ENCODE measurements at regions of chr2 and their contacts with region 1.

Region 1: GRCh38 chr2:86764661-86765307 is 25.9 kb downstream of the CD8A start:
- DNase-seq: peak; percentile 69
- ATAC-seq: peak; percentile 95
- H3K4me3 Mint-ChIP-seq: no peak overlapping the region
- H3K27ac Mint-ChIP-seq: peak overlapping the region; percentile 79
- H3K4me1 Mint-ChIP-seq: peaks cover 39% of the 10 kb centered on the region
- H3K27me3 Mint-ChIP-seq: no peaks in the 10 kb centered on the region
- CTCF ChIP-seq: peak; percentile 75

Region 2: DNA sequence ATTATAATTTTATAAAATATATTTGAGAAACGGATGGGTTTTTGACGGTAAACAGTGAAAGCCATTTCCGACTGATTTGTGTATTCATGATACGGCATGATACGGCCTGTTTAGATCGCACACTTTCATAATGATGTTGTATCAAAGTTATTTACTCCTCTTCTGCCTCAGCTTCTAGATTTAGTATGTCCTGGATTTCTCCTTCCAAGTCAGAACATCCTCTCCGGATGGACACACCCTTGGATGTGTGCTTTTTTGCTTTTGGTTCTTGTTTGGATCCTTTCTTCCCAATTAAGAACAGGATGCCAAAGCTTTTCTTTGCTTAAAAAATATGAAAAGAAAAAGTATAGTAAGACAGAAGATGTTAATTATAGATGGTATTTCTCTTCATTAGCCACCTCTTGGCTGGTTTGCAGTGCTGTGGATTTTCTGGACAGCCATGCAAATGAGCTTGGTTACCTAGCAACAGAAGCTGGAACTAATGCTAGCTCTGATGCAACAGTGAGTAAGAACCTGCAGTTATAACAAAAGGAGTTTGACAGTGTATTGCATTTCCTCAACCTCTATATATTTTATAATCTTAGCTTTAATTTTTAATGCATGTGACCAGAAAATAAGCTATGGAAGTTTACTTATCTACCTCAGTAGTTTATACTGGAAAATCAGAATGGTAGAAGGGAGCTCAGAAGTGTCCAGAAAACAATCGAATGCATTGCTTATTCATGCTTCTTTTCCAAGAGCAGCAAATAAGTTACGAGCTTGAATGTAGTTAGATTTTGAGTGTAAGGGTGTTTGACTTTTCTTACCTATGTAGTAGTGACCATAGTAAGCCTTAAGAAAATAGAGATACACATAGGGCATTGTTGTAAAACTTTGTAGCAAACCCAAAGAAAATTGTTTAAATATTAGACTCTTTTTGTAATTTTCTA is 16.8 kb before region 1 on chr2:
- CTCF ChIA-PET with region 1: interaction called, 29 read pairs
- POLR2A ChIA-PET with region 1: interaction called, 3 read pairs
- intact Hi-C with region 1: no loop called
- DNase-seq: peak; percentile 52
- ATAC-seq: peak; percentile 77
- H3K4me3 Mint-ChIP-seq: no peak overlapping the region
- H3K27ac Mint-ChIP-seq: peak overlapping the region; percentile 72
- H3K4me1 Mint-ChIP-seq: peaks cover 50% of the 10 kb centered on the region
- H3K27me3 Mint-ChIP-seq: no peaks in the 10 kb centered on the region
- CTCF ChIP-seq: no peak

Region 3: DNA sequence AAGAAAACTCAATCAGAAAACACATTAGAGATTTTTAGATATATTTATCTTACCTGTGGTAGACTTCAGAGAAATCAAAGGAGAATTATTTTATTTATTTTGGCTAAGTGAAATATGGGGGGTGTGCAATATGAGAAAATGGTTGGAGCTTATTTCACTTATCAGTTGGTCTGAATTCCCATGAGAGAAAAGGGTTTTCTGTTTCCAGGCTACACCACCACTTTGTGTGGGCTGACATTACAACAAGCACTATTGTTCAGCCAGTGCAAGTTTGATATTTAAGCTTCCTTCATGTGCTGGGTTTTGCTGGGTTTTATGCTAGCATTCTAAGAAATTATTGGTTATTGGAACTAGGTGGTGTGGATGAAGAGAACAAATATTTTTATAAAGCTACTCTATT is 11.2 kb before region 1 on chr2:
- CTCF ChIA-PET with region 1: interaction called, 29 read pairs
- POLR2A ChIA-PET with region 1: interaction called, 3 read pairs
- intact Hi-C with region 1: no loop called
- DNase-seq: no peak
- ATAC-seq: no peak
- H3K4me3 Mint-ChIP-seq: no peak overlapping the region
- H3K27ac Mint-ChIP-seq: peak overlapping the region; percentile 39
- H3K4me1 Mint-ChIP-seq: peaks cover 31% of the 10 kb centered on the region
- H3K27me3 Mint-ChIP-seq: no peaks in the 10 kb centered on the region
- CTCF ChIP-seq: no peak

Region 4: DNA sequence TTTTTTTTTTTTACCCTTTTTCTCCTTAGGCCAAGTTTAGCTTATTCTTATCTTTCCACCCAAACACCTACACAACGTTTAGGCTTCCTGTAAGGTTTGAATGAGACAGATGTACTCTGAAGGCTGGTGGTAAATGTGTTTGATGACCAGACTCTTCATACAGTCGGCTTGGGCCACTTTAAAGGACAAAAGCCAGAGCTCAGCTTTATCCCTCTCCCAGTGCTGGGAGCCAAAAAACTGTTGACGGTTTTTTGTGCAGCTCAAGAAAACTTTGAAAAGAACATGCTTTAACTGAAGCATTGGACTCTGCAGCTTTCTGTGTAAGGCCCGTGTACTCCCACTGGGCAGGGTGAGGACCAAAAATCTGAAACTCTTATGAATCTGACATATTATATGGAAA is 10.6 kb after region 1 on chr2:
- CTCF ChIA-PET with region 1: interaction called, 123 read pairs
- POLR2A ChIA-PET with region 1: interaction called, 3 read pairs
- intact Hi-C with region 1: no loop called
- DNase-seq: no peak
- ATAC-seq: no peak
- H3K4me3 Mint-ChIP-seq: no peak overlapping the region
- H3K27ac Mint-ChIP-seq: no peak overlapping the region
- H3K4me1 Mint-ChIP-seq: peaks cover 27% of the 10 kb centered on the region
- H3K27me3 Mint-ChIP-seq: no peaks in the 10 kb centered on the region
- CTCF ChIP-seq: no peak

Region 5: DNA sequence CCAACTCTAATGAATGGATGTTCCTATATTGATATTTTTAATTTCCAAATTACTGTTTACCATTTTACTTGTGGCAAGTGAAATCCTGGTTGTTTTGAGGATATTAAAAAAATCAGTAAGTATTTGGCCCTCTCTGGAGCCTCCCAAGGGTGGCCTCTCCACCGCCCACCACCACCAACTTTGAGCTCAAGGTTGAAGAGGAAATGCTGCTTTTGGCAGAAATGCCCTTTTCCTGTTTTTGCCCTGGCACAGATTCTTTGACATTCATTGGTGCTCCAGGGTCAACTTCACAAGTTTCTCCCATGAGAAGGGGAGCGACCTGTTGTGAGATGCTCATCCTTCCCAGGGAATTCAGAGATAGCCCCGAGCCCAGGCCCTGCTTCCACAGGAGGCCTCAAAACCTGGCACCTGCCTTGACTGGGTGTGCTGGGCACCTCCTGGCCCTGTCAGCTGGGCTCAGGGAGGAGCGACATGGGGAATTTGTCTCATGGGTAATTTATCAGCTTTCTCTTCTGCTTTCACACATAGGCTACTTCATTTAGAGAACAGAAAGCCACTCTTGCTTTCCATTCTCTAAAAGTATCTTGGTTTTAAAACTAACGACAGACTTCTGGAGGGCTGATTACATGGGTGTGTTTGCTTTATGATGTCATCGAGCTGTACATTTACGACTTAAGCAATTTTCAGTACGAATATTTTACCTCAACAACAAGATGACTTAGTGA is 19.0 kb after region 1 on chr2:
- CTCF ChIA-PET with region 1: interaction called, 123 read pairs
- POLR2A ChIA-PET with region 1: interaction called, 9 read pairs
- intact Hi-C with region 1: no loop called
- DNase-seq: peak; percentile 67
- ATAC-seq: peak; percentile 4
- H3K4me3 Mint-ChIP-seq: peak overlapping the region; percentile 60
- H3K27ac Mint-ChIP-seq: peak overlapping the region; percentile 96
- H3K4me1 Mint-ChIP-seq: peaks cover 61% of the 10 kb centered on the region
- H3K27me3 Mint-ChIP-seq: no peaks in the 10 kb centered on the region
- CTCF ChIP-seq: no peak

Region 6: DNA sequence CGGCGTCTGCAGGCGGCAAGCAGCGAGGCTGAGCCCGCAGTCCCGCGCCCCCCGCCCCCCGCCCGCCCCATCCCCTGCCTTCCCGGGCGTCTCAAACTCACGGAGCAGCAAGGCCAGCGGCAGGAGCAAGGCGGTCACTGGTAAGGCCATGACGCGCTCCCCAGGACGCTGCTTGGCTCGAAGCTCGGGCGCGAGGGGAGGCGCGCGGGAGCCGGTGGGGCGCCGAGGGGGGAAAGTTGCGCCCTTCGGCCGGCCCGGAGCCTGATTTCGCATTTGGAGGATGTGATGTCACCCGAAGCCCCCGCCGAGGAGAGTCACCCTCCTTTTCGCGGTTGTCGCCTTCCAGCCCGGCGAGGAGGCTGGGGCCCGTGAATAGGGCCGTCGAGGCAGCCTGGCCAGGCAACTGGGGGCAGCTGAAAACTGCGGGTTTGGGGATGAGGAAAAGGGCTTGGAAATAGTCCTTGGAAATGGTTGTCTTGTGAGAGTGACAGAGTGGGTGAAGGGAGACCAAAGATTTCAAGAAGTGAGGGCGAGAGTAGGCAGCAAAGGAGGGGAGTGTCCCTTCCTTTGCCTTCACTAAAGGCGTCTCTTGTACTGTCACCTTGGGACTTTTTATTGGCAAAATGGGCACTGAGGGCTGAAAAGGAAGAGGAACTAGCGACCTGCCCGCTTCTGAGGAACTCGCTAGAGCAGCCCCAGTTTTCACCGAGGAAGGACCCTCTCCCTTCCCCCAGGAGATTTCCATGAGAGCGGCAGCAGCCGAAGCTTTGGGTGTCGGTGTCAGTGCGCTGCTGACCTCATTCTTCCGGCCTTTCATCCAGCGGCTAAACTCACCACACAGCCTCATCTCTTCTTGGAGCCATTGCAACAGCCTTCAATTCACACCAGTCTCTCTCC is 26.1 kb after region 1 on chr2 and contains the start of gene CD8A:
- CTCF ChIA-PET with region 1: interaction called, 123 read pairs
- POLR2A ChIA-PET with region 1: interaction called, 4 read pairs
- intact Hi-C with region 1: no loop called
- DNase-seq: peak; percentile 91
- ATAC-seq: peak; percentile 32
- H3K4me3 Mint-ChIP-seq: peak within 1 kb of the TSS; percentile 96
- H3K27ac Mint-ChIP-seq: peak within 1 kb of the TSS; percentile 100
- H3K4me1 Mint-ChIP-seq: peaks cover 47% of the 10 kb centered on the region
- H3K27me3 Mint-ChIP-seq: no peaks in the 10 kb centered on the region
- CTCF ChIP-seq: no peak
- total RNA-seq, gene CD8A: 419 to 432 TPM

Region 7: GRCh38 chr2:86808315-86809161 is 43.8 kb after region 1 on chr2:
- CTCF ChIA-PET with region 1: interaction called, 34 read pairs
- POLR2A ChIA-PET with region 1: interaction called, 8 read pairs
- intact Hi-C with region 1: loop called (anchors 2 kb)
- DNase-seq: peak; percentile 98
- ATAC-seq: peak; percentile 72
- H3K4me3 Mint-ChIP-seq: peak overlapping the region; percentile 87
- H3K27ac Mint-ChIP-seq: peak overlapping the region; percentile 90
- H3K4me1 Mint-ChIP-seq: peaks cover 45% of the 10 kb centered on the region
- H3K27me3 Mint-ChIP-seq: no peaks in the 10 kb centered on the region
- CTCF ChIP-seq: peak; percentile 86